Natural killer cell (primary cell): ENCODE measurements at regions of chr6 and their contacts with region 1.

Region 1: DNA sequence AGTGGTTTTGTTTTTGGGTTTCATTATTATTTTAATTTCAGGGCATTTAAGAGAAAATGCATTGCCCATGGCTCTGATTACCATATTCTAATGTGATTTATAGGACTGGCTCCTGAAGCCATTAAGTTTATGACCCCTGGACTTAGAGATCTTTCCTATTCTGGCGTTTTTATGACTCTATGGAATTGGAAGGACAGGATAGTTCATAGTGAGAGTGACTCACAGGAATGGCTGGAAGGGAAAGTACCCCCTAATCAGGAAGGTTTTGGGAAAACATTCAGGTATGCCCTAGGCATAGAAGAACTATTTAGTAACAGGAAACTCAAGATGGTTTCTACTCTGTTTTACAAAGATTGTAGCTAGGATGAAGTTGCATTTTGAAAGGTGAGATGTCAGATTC is 108.6 kb upstream of the SLC2A12 start:
- DNase-seq: no peak
- ATAC-seq: no peak
- H3K4me3 ChIP-seq: no peak overlapping the region
- H3K4me3 Mint-ChIP-seq: no peak overlapping the region
- H3K27ac ChIP-seq: no peak overlapping the region
- H3K27ac Mint-ChIP-seq: no peak overlapping the region
- H3K4me1 ChIP-seq: no peaks in the 10 kb centered on the region
- H3K4me1 Mint-ChIP-seq: no peaks in the 10 kb centered on the region
- H3K27me3 ChIP-seq: no peaks in the 10 kb centered on the region
- H3K27me3 Mint-ChIP-seq: peaks cover 10 to 13% of the 10 kb centered on the region in 2 donors
- CTCF ChIP-seq: no peak

Region 2: DNA sequence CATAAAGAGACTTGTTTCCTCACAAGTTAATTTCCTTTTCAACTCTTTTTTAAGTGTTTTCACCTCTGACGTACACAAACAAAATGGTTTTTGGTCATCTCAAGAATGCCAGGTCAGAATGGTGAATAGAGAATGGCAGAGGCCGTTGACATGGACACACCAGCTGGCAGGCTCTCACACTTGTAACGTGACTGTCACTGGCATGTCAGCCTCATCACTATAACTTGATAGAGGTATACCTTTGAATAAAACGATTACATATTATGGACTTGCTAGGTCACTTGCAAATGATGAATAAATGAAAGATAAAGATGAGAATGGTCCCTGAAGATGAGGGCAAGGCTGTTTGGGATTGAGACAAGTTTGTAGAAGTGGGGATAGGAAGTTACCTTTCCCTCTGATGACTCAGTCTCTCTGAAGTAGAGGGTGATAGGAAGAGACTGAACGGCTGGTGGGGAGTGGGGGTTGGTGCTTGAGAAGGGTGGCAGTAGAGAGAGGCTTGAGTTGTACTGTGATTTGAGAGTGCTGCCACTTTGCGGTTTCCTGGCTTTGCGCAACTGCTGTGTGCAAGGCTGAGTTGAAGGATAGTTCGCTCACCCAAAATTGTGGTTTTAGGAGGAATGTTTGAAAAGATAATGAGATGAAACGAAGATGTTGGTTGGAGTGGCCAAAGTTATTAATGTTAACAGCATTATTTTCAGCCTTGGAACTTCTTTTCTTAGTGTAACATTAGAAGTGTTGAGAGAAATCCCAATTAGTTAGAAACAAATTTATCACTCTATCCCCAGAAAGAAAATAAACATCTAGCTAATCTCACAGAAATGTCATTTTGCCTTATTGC is 177.7 kb before region 1 on chr6:
- intact Hi-C with region 1: no loop called
- DNase-seq: peak in 1 of 2 donors; percentile 70
- ATAC-seq: peak; percentile 85 to 95 (median 90)
- H3K4me3 ChIP-seq: no peak overlapping the region
- H3K4me3 Mint-ChIP-seq: peak overlapping the region; percentile 35
- H3K27ac ChIP-seq: no peak overlapping the region
- H3K27ac Mint-ChIP-seq: peak overlapping the region; percentile 52 to 61
- H3K4me1 ChIP-seq: peaks cover 7% of the 10 kb centered on the region
- H3K4me1 Mint-ChIP-seq: peaks cover 44 to 46% of the 10 kb centered on the region in 2 donors
- H3K27me3 ChIP-seq: no peaks in the 10 kb centered on the region
- H3K27me3 Mint-ChIP-seq: no peaks in the 10 kb centered on the region
- CTCF ChIP-seq: no peak

Region 3: DNA sequence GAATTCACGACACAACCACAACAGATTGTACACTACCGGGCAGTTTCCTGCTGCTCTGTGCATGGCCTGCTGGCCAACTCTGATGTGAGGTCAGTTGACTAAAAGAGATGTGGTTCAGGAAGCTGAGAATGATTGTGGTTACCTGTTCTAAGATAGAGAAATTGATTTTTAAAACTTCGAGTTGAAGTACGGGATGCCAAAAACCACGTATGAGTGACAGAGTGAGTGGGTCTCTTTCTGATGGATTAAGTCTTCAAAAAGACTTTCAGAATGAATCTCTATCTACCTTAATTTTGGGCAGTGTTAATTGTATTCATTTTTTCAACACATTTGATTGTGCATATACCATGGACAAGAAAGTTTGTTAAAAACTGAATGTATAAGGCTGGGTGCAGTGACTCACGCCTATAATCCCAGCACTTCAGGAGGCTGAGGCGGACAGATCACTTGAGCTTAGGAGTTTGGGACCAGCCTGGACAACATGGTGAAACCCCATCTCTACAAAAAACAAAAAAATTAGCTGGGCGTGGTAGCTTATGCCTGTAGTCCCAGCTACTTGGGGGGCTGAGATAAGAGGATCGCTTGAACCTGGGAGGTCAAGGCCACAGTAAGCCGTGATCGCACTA is 35.6 kb after region 1 on chr6:
- intact Hi-C with region 1: no loop called
- DNase-seq: no peak
- ATAC-seq: peak; percentile 26 to 66 (median 53)
- H3K4me3 ChIP-seq: no peak overlapping the region
- H3K4me3 Mint-ChIP-seq: no peak overlapping the region
- H3K27ac ChIP-seq: no peak overlapping the region
- H3K27ac Mint-ChIP-seq: no peak overlapping the region
- H3K4me1 ChIP-seq: peaks cover 9% of the 10 kb centered on the region
- H3K4me1 Mint-ChIP-seq: peaks cover 6 to 9% of the 10 kb centered on the region in 2 donors
- H3K27me3 ChIP-seq: no peaks in the 10 kb centered on the region
- H3K27me3 Mint-ChIP-seq: no peaks in the 10 kb centered on the region
- CTCF ChIP-seq: no peak

Region 4: DNA sequence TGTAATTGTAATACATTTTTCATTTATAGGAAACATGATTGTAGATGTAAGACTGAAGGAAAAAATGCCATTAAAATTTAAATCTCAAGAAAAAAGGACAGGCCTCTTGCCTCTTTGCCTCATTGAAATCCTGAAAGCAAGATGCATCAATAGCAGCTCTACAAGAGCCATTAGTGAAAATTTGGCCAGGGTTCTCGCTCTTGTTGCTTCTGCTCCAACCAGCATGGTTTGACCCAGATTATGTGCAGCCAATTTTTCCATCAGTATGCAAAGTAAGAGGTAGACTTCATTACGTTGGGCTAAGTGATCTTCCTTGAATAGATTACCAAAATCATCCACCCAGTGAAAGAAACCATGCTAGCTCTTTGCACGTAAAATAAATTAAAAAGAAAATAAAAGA is 50.3 kb after region 1 on chr6:
- intact Hi-C with region 1: no loop called
- DNase-seq: no peak
- ATAC-seq: no peak
- H3K4me3 ChIP-seq: no peak overlapping the region
- H3K4me3 Mint-ChIP-seq: no peak overlapping the region
- H3K27ac ChIP-seq: no peak overlapping the region
- H3K27ac Mint-ChIP-seq: no peak overlapping the region
- H3K4me1 ChIP-seq: no peaks in the 10 kb centered on the region
- H3K4me1 Mint-ChIP-seq: no peaks in the 10 kb centered on the region
- H3K27me3 ChIP-seq: no peaks in the 10 kb centered on the region
- H3K27me3 Mint-ChIP-seq: no peaks in the 10 kb centered on the region
- CTCF ChIP-seq: no peak

Region 5: GRCh38 chr6:134882426-134883038 is 721.5 kb after region 1 on chr6:
- intact Hi-C with region 1: loop called (anchors 2 kb)
- DNase-seq: peak; percentile 27 to 73
- ATAC-seq: peak; percentile 64 to 69 (median 68)
- H3K4me3 ChIP-seq: no peak overlapping the region
- H3K4me3 Mint-ChIP-seq: no peak overlapping the region
- H3K27ac ChIP-seq: no peak overlapping the region
- H3K27ac Mint-ChIP-seq: no peak overlapping the region
- H3K4me1 ChIP-seq: no peaks in the 10 kb centered on the region
- H3K4me1 Mint-ChIP-seq: no peaks in the 10 kb centered on the region
- H3K27me3 ChIP-seq: no peaks in the 10 kb centered on the region
- H3K27me3 Mint-ChIP-seq: peaks cover 20 to 24% of the 10 kb centered on the region in 2 donors
- CTCF ChIP-seq: peak; percentile 78

Region 6: GRCh38 chr6:134938896-134939295 is 777.9 kb after region 1 on chr6:
- intact Hi-C with region 1: loop called (anchors 2 kb)
- DNase-seq: peak in 1 of 2 donors; percentile 72
- ATAC-seq: peak in 1 of 3 donors; percentile 39
- H3K4me3 ChIP-seq: no peak overlapping the region
- H3K4me3 Mint-ChIP-seq: no peak overlapping the region
- H3K27ac ChIP-seq: no peak overlapping the region
- H3K27ac Mint-ChIP-seq: no peak overlapping the region
- H3K4me1 ChIP-seq: no peaks in the 10 kb centered on the region
- H3K4me1 Mint-ChIP-seq: no peaks in the 10 kb centered on the region
- H3K27me3 ChIP-seq: no peaks in the 10 kb centered on the region
- H3K27me3 Mint-ChIP-seq: no peaks in the 10 kb centered on the region
- CTCF ChIP-seq: no peak